ENCODE measurements at regions of chr14 and their contacts with region 1.

Region 1: DNA sequence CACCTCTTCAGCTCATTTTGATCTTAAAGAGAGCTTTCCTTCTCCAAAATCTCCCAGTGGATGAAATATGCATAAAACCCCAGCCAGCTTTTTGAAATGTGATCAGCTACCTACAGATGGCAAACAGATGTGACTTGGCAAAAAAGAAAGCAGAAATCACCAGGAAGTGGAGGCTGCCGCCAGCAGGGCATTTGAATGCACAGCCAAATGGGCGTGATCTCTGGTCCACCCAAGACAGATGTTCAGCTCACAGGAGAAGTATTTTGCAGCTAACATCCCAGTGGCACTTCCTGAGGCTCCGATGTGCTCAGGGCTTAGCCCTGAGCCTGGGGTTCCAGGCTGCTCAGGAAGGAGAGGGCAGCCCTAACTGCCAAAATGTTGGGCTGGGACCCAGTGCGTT is 78.3 kb downstream of the LGMN start:
- DNase-seq: no peak
- ATAC-seq: peak; percentile 22 to 51
- H3K4me3 Mint-ChIP-seq: peak overlapping the region in 1 of 10 donors; percentile 18
- H3K27ac Mint-ChIP-seq: peak overlapping the region; percentile 55 to 92 (median 86)
- H3K4me1 Mint-ChIP-seq: peaks cover 40 to 88% (median 83%) of the 10 kb centered on the region in 4 donors
- H3K27me3 Mint-ChIP-seq: no peaks in the 10 kb centered on the region

Region 2: GRCh38 chr14:92563359-92563758 is 106.8 kb before region 1 on chr14:
- POLR2A ChIA-PET with region 1: interaction called, 10 read pairs
- DNase-seq: peak in 1 of 10 donors; percentile 15
- ATAC-seq: peak in 1 of 2 donors; percentile 55
- H3K4me3 Mint-ChIP-seq: no peak overlapping the region
- H3K27ac Mint-ChIP-seq: peak overlapping the region in 6 of 10 donors; percentile 21 to 73 (median 48)
- H3K4me1 Mint-ChIP-seq: peaks cover 8 to 68% (median 63%) of the 10 kb centered on the region in 4 donors
- H3K27me3 Mint-ChIP-seq: no peaks in the 10 kb centered on the region